ENCODE measurements at regions of chr17 and their contacts with region 1.

Region 1: DNA sequence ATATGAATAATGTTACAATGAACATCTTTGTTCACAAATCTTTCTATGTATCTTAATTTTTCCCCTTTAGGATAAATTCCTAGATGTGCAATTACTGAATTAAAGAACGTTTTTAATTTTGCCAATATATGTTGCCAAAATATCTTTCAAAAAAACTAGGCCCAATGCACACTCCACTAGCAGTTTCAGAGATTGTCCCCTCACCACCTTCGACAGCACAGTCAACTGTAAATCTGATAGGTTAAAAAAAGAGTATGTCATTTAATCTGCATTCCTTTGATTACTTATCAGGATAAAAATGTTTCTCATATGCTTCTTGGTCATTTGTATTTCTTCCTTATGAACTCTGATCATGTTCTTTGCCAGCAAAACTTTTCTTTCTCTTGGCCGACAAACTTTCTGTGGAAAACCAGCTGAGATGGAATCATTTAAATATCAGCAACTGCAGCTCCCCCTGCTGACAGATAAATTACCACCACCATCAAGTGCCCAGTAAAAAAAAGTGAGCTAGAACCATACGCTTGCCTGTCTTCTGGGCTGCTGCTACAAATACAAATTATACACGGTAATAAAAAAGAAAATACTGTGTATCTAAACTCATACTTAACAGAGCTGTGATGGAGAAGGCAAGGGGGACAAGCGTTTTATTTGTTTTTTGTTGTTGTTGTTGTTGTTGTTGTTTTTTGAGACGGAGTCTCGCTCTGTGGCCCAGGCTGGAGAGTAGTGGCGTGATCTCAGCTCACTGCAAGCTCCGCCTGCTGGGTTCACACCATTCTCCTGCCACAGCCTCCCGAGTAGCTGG is 19.6 kb upstream of the KANSL1 start:
- DNase-seq: peak; percentile 73 to 82
- ATAC-seq: peak; percentile 84

Region 2: GRCh38 chr17:46002311-46002972 is 210.4 kb before region 1 on chr17:
- intact Hi-C with region 1: loop called in 1 of 2 experiments (anchors 5 kb)
- DNase-seq: peak; percentile 38 to 78
- ATAC-seq: peak; percentile 62

Region 3: DNA sequence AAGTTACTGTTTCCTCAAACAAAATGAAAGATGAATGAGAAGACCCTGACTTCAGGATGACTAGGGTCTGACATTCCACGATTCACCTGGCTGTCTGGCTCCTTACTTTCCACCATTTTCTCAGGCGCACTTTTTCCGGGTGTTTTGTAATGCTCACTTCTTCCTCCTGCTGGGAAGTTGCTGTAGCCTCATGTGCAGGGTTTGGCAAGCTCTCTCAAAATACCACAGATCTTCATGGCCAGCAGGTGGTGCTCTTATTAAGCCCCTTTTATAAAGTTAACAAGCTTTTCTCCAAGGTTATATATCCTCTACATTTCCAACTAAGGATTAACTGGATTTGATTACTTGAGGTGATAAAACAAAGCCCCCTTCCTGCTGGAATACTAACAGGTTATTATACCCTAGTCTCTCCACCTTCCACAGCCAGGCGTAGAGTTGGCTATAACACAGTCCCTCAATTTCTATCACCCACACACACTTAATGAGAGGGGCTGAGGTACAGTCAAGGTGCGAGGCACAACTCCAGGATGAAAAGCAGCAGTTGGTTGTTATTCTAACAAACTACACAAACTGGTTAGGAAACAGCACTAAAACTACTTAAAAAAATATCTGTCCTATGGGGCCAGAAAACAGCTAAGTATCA is 168.4 kb before region 1 on chr17:
- intact Hi-C with region 1: loop called in 1 of 2 experiments (anchors 5 kb)
- DNase-seq: peak; percentile 81
- ATAC-seq: peak; percentile 80

Measured in left colon (tissue), 2 donors.